Cardiac septum (tissue), 1 donor: ENCODE measurements at regions of chr17 and their contacts with region 1.

Region 1: DNA sequence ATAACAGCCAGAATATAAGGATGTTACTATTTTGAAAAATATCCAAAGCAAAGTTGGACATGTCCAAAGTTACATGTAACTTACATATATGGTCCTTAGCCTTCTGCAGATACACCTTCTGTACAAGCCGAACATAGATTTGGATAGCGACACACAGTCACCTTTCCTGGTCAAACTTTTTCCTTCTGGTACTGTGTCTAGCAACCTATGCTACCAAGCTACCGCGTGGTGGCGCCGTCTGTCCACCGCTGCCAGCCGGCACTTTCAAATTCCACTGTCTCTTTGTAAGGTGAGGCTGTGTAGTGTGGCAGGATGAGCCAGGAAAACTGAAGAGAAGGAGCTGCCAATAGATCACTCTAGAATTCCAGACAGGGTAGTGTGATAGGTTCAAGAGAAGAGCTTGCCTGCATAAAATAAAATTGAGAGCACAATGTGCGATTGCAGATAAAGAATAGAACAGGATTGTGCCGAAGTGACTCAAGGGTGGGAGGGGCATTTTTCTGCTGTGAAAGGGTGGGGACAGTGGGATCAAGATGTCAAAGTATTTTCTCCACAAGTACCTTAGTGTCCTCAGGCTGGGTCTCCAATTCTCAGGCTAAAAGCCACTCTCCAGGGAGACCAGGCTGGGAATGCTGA is 366.9 kb downstream of the SLC39A11 start:
- DNase-seq: peak; percentile 84

Region 2: GRCh38 chr17:72556944-72557826 is 168.4 kb before region 1 on chr17:
- intact Hi-C with region 1: loop called (anchors 2 kb)
- DNase-seq: no peak

Region 3: GRCh38 chr17:72631949-72632684 is 93.4 kb before region 1 on chr17:
- intact Hi-C with region 1: no loop called
- DNase-seq: no peak

Region 4: DNA sequence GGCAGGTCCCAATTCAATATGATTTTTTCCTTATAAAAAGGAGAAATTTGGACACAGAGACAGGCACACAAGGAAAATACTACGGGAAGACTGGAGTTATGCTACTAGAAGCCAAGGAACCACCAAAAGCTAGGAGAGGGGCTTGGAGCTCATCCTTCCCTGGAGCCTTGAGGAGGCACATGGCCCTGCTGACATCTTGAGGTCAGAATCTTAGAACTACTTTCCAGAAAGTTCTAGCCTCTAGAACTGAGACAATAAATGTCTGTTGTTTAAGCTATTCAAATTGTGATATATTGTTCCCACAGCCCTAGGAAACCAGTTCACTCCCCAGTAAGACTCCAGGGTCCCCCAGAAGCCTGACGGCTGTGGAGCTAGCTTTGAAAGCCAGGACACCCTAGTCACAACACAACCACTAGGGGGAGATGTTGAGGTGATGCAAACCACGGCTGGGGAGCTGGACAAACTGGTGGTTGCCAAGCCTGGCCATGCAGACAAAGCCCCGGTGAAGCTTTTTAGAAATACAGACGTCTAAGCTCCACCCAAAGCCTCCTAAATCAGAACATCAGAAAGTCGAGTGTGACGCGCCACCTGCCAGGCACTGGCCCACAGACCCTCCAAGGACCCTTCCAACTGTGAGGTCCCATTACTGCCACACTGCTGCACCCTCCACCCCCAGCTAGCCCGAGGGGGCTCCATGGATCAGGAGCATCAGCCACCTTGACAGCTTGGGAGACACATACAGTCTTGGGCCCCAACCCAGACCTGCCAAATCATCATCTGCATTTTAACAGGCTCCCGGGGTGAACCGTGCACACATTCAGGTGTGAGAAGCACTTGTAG is 260.6 kb after region 1 on chr17:
- intact Hi-C with region 1: loop called (anchors 10 kb)
- DNase-seq: peak; percentile 81

Region 5: DNA sequence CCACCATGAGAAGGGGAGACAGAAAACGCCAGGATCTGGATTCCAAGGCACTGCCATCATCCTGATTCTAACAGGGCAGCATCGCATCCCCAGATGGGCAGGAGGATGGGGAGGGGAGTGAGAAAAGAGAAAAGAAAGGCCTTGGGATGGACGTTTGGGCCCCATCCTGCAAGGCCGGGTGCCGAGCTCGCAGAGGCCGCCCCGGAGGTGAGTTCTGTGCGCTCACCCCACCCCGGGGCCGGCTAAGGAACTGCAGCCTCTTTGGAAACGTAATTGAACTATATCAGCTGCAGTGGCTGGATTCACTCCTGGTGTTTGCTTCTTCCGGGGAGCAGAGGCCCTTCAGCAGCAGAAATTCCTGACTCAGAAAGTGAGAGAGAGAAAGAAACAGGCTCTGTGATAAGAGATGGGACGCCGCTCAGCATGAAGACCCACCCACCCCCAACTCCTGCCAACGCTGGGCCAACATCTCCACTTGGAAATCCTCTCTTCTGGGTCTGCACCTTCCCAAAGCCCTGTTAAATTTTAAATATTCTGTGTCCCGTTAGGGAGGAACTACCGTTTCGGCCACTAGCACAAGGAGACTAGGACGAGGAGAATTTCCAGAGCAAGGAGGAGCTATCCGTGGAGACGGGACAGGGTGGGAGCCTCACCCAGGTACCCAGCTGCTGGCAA is 430.8 kb after region 1 on chr17:
- intact Hi-C with region 1: loop called (anchors 2 kb)
- DNase-seq: peak; percentile 85

Region 6: GRCh38 chr17:73231841-73232586 is 506.5 kb after region 1 on chr17:
- intact Hi-C with region 1: loop called (anchors 5 kb)
- DNase-seq: peak; percentile 99

Region 7: GRCh38 chr17:73371285-73371684 is 645.7 kb after region 1 on chr17:
- intact Hi-C with region 1: loop called (anchors 10 kb)
- DNase-seq: no peak